PC-3 (cell line): ENCODE measurements at regions of chr15 and their contacts with region 1.

Region 1: DNA sequence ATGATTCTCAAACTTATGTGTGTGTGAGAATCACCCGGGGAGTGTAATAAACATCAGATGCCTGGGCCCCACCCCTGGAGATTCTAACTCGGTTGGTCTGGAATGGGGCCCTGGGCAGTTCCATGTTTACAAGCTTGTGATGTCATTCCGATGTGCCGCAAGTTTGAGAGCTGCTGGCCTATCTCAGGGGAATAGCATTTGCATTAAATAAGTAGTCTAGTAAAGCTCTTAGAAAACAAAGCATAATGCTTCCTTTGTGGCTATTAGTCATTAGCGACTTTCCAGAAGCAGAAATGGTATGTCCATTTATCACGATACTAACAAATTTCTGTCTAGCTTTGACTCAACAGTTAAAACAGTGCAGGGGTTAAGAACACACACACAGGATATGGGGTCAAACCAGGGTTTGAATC is 20.9 kb downstream of the PGBD4 start:
- DNase-seq: peak; percentile 91
- ATAC-seq: peak; percentile 87
- H3K4me3 ChIP-seq: no peak overlapping the region
- H3K27ac ChIP-seq: peak overlapping the region; percentile 88
- H3K4me1 ChIP-seq: peaks cover 26% of the 10 kb centered on the region
- H3K27me3 ChIP-seq: no peaks in the 10 kb centered on the region
- CTCF ChIP-seq: no peak

Region 2: DNA sequence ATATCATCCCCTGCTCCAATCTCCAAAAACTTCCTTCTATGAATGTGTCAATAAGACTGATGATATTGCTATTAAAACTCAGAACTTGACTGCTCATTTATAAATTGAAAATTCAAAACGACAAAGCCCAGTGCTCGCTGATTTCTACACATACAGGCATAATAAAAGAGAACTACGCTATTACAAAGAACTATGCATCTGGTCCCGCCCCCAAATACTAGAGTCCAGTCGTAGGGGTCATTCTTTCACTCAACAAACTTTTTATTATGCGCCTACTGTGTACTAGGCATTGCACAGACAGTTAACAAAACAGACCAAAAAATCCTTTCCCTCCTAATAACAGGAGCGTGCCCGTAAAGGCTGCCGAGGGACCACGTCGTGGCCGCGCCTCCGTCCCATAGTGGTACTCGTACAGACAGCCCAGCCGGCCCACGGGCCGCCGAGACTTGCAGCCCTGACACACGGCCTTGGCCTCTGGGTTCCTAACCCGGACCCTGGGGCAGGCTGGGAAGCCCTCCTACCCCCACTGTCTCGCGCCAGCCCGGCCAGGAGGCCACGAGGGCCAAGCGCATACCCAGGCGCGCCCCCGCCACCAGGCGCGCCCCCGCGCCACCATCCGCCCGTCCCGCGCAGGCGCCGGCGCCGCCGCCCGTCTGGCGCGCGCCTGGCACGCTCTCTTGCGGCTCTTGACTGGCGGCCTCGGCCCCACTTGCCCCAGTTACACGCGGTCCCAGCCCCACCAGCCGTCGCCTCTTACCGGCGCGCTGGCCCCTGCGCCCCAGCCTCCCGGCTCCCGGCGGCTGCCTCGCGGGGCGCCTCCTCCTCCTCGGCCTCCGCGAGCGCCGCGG is 84.5 kb before region 1 on chr15:
- CTCF ChIA-PET with region 1: no interaction called
- POLR2A ChIA-PET with region 1: no interaction called
- intact Hi-C with region 1: no loop called
- DNase-seq: peak; percentile 79
- ATAC-seq: peak; percentile 79
- H3K4me3 ChIP-seq: peak overlapping the region; percentile 94
- H3K27ac ChIP-seq: no peak overlapping the region
- H3K4me1 ChIP-seq: peaks cover 12% of the 10 kb centered on the region; the same call in 1 of the 2 replicates
- H3K27me3 ChIP-seq: no peaks in the 10 kb centered on the region
- CTCF ChIP-seq: no peak

Region 3: DNA sequence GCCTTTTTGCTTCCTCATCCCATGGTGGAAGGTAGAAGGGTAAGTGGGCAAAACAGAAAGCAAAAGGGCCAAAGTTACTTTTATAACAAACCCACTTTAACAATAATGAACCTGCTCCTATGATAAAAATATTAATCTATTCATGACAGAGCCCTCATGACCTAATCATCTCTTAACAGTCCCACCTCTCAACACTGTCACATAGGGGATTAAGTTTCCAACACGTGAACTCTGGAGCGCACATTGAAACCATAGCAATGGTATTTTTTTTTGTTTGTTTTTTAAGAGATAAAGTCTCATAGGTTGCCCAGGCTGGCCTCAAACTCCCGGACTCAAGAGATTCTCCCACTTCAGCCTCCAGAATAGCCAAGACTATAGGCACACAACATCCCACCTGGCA is 56.5 kb after region 1 on chr15:
- CTCF ChIA-PET with region 1: no interaction called
- POLR2A ChIA-PET with region 1: no interaction called
- intact Hi-C with region 1: loop called (anchors 5 kb)
- DNase-seq: no peak
- ATAC-seq: no peak
- H3K4me3 ChIP-seq: no peak overlapping the region
- H3K27ac ChIP-seq: no peak overlapping the region
- H3K4me1 ChIP-seq: no peaks in the 10 kb centered on the region
- H3K27me3 ChIP-seq: no peaks in the 10 kb centered on the region
- CTCF ChIP-seq: no peak